Naive thymus-derived CD4-positive, alpha-beta T cell (primary cell): ENCODE measurements at regions of chr17 and their contacts with region 1.

Region 1: GRCh38 chr17:75563063-75563758 is 24.4 kb upstream of the MYO15B start:
- DNase-seq: no peak
- ATAC-seq: no peak
- H3K4me3 ChIP-seq: no peak overlapping the region
- H3K4me3 Mint-ChIP-seq: no peak overlapping the region
- H3K27ac ChIP-seq: no peak overlapping the region
- H3K27ac Mint-ChIP-seq: no peak overlapping the region
- H3K4me1 ChIP-seq: no peaks in the 10 kb centered on the region
- H3K4me1 Mint-ChIP-seq: no peaks in the 10 kb centered on the region
- H3K27me3 ChIP-seq: no peaks in the 10 kb centered on the region
- H3K27me3 Mint-ChIP-seq: no peaks in the 10 kb centered on the region

Region 2: DNA sequence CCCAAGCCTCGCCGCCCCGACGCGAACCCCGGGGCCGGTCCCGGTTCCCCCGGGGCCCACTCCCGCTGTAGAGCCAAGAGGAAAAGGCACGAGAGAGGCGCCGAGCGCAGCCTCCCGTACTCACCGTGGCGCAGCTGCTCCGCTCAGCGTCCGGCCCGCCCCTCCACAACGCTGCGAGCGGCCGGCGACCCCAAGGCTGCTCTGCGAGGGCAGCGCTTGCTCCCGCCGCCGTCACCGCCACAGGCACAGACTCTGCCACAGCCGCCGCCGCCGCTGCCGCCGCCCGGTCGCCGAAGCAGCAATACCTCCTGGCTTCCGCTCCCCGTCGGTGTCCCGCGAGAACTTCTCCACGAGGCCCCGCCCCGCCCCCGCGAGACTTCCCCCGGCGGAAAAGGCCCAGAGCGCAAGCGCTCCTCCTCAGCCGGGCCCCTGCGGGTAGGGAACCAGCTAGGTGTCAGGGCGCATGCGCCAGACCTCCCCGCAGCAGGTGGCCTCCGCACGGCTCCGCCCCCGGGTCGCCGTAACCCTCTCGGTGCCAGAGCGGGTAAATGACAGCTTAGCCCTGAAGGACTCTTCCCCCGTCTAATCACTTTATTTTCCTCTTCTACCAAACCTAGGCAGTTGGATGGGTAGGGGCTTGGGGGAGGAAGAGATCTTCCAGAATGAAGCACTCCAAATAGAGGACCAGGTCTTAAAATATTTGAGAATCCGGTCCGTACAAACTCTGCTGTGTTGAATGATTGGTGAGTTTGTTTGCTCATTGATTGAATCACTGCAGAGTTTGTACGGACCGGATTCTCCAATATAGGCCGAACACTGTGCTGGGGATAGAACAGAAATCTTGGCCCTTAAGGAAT is 157.6 kb before region 1 on chr17 and contains the start of gene GRB2:
- CTCF ChIA-PET with region 1: no interaction called
- POLR2A ChIA-PET with region 1: no interaction called
- intact Hi-C with region 1: no loop called
- DNase-seq: peak; percentile 98 to 100 (median 100)
- ATAC-seq: peak; percentile 93
- H3K4me3 ChIP-seq: peak within 1 kb of the TSS; percentile 83
- H3K4me3 Mint-ChIP-seq: peak within 1 kb of the TSS; percentile 91 to 100 (median 96)
- H3K27ac ChIP-seq: peak within 1 kb of the TSS; percentile 91
- H3K27ac Mint-ChIP-seq: peak within 1 kb of the TSS; percentile 84 to 98 (median 95)
- H3K4me1 ChIP-seq: peaks cover 31 to 33% of the 10 kb centered on the region in 2 donors
- H3K4me1 Mint-ChIP-seq: peaks cover 26 to 51% (median 47%) of the 10 kb centered on the region in 7 donors
- H3K27me3 ChIP-seq: no peaks in the 10 kb centered on the region
- H3K27me3 Mint-ChIP-seq: no peaks in the 10 kb centered on the region
- total RNA-seq, gene GRB2: 112 to 167 (median 139) TPM

Region 3: DNA sequence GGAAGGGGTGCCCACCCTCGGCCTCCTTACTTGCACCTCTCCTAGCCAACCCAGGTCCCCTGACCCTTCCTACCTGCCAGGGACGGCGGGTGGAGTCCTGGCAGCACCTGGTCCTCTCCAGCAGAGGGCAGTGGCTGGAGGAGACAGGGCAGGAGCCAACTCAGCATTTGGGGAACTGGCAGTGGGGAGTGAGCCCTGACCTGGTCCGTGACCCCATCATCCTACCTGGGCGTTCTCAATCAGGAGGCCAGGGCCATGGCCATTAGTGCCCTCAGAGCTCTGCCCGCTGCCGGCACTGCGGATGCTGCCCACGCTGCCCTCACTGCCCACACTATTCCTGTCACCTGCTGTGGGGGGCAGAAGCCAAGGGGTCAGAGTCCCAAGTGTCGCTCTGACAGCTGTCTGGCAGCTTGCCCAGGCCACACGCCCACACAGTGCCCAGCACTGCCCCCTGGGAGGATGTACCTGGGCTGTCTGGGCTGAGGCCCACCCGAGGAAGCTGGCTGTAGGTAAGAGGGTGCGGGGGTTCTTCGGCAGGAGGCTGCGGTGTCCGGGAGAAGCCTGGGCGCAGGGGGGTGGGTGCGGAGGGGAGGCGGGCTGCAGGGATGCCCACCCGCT is 58.8 kb before region 1 on chr17:
- CTCF ChIA-PET with region 1: no interaction called
- POLR2A ChIA-PET with region 1: no interaction called
- intact Hi-C with region 1: loop called in 1 of 2 experiments (anchors 2 kb)
- DNase-seq: peak in 4 of 9 donors; percentile 26 to 41 (median 38)
- ATAC-seq: peak; percentile 73
- H3K4me3 ChIP-seq: no peak overlapping the region
- H3K4me3 Mint-ChIP-seq: no peak overlapping the region
- H3K27ac ChIP-seq: no peak overlapping the region
- H3K27ac Mint-ChIP-seq: no peak overlapping the region
- H3K4me1 ChIP-seq: no peaks in the 10 kb centered on the region
- H3K4me1 Mint-ChIP-seq: peaks cover 0 to 2% (median 0%) of the 10 kb centered on the region in 7 donors
- H3K27me3 ChIP-seq: no peaks in the 10 kb centered on the region
- H3K27me3 Mint-ChIP-seq: no peaks in the 10 kb centered on the region

Region 4: GRCh38 chr17:76053246-76054116 is 490.3 kb after region 1 on chr17:
- CTCF ChIA-PET with region 1: no interaction called
- POLR2A ChIA-PET with region 1: no interaction called
- intact Hi-C with region 1: no loop called
- DNase-seq: no peak
- ATAC-seq: no peak
- H3K4me3 ChIP-seq: no peak overlapping the region
- H3K4me3 Mint-ChIP-seq: no peak overlapping the region
- H3K27ac ChIP-seq: no peak overlapping the region
- H3K27ac Mint-ChIP-seq: peak overlapping the region in 4 of 9 donors; percentile 13 to 67 (median 32)
- H3K4me1 ChIP-seq: no peaks in the 10 kb centered on the region
- H3K4me1 Mint-ChIP-seq: peaks cover 11 to 33% (median 25%) of the 10 kb centered on the region in 7 donors
- H3K27me3 ChIP-seq: no peaks in the 10 kb centered on the region
- H3K27me3 Mint-ChIP-seq: no peaks in the 10 kb centered on the region